Psoas muscle (tissue), 8 donors: ENCODE measurements at regions of chr10 and their contacts with region 1.

Region 1: GRCh38 chr10:74831518-74832120 is 5.2 kb downstream of the KAT6B start:
- DNase-seq: no peak
- ATAC-seq: no peak
- H3K4me3 ChIP-seq: no peak overlapping the region
- H3K27ac ChIP-seq: peak overlapping the region; percentile 18
- H3K4me1 ChIP-seq: peaks cover 44% of the 10 kb centered on the region
- H3K27me3 ChIP-seq: no peaks in the 10 kb centered on the region
- CTCF ChIP-seq: no peak

Region 2: DNA sequence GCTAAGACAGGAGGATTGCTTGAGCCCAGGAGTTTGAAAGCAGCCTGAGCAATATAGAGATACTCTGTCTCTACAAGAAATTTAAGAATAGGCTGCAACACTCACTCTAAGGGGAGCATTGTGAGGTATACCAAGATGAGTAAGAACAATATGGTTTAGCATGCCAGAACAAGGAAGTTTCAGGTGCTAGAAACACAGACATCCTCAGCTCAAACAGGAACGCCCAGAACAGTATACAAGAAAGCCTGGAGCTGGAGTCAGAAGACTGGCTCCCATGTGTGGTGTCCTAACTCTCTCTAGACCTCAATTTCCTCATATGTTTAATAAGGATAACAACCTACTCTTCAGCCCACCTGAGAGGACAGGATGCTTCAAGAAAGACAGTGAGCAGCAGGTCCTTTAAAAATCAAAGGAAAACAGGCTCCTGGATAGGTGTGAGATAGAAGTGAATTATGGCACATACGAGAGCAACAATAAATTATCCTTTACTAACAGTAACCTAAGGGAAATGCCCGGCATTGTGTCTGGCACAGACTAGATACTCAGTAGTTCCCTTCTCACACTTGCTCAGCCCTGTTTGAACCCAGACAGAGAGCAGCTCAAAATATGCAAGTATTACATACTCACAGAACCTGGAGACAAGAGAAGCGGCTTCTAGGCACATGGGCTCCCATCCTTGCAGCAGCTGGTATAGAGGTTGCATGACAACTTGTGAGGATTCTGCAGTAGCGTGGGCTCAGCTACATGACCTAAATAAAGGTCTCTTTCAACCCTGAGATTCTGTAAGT is 40.2 kb after region 1 on chr10:
- intact Hi-C with region 1: no loop called
- DNase-seq: no peak
- ATAC-seq: no peak
- H3K4me3 ChIP-seq: no peak overlapping the region
- H3K27ac ChIP-seq: no peak overlapping the region
- H3K4me1 ChIP-seq: peaks cover 25% of the 10 kb centered on the region
- H3K27me3 ChIP-seq: no peaks in the 10 kb centered on the region
- CTCF ChIP-seq: no peak

Region 3: GRCh38 chr10:74924251-74924951 is 92.8 kb after region 1 on chr10:
- intact Hi-C with region 1: loop called in 1 of 2 experiments (anchors 5 kb)
- DNase-seq: no peak
- ATAC-seq: peak; percentile 70 to 84 (median 81)
- H3K4me3 ChIP-seq: no peak overlapping the region
- H3K27ac ChIP-seq: peak overlapping the region; percentile 68
- H3K4me1 ChIP-seq: peaks cover 81% of the 10 kb centered on the region
- H3K27me3 ChIP-seq: no peaks in the 10 kb centered on the region
- CTCF ChIP-seq: no peak

Region 4: DNA sequence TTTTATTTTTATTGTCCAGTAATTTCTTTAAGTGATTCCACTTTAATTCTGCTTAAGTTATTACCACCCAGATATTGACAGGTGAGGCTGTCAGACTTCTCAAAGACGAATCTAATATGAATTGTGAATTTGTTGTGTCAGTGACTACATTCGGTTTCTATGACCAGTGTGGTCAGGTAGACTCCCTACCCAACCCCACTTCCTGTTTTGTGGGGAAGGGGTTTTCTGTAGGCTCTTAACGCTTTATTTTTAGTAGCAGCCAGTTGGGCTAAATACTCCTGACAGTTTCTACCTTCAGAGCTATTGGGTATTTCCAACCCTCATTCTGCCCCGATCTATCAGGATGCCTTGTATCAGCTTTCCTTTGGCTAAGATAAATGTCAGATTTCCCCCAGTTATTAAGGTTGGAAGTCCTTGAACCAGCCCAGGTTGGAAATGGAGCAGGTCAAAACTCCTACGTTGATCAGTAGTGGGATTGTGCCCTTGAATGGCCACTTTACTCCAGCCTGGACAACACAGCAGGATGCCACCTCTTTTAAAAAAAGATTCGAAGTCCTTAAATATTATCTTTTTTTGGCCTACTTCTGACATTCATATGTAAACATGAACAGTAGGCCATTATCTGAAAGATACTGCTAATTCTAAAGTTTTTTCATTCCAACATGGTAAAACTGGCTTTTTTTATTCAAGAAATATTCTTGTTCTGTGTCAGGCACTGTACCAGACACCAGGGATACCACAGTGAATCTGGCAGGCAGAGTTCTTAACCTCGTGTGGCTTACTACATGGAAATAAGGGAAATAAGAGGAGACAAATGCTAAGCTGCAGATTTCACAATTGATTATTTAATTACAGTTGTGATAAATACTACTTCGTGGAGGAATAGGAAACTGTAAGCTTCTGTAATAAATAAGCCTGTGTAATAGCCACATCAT is 146.6 kb after region 1 on chr10:
- intact Hi-C with region 1: no loop called
- DNase-seq: no peak
- ATAC-seq: no peak
- H3K4me3 ChIP-seq: no peak overlapping the region
- H3K27ac ChIP-seq: no peak overlapping the region
- H3K4me1 ChIP-seq: peaks cover 9% of the 10 kb centered on the region
- H3K27me3 ChIP-seq: no peaks in the 10 kb centered on the region
- CTCF ChIP-seq: no peak